Activated CD8-positive, alpha-beta T cell treated with anti-CD3 and anti-CD28 coated beads for 36 hours (primary cell): ENCODE measurements at regions of chr11 and their contacts with region 1.

Region 1: GRCh38 chr11:14907411-14908213 is 15.6 kb upstream of the CYP2R1 start:
- DNase-seq: peak; percentile 93
- ATAC-seq: peak; percentile 59
- H3K4me3 Mint-ChIP-seq: no peak overlapping the region
- H3K27ac Mint-ChIP-seq: no peak overlapping the region
- H3K4me1 Mint-ChIP-seq: peaks cover 48% of the 10 kb centered on the region
- H3K27me3 Mint-ChIP-seq: no peaks in the 10 kb centered on the region
- CTCF ChIP-seq: peak; percentile 90

Region 2: DNA sequence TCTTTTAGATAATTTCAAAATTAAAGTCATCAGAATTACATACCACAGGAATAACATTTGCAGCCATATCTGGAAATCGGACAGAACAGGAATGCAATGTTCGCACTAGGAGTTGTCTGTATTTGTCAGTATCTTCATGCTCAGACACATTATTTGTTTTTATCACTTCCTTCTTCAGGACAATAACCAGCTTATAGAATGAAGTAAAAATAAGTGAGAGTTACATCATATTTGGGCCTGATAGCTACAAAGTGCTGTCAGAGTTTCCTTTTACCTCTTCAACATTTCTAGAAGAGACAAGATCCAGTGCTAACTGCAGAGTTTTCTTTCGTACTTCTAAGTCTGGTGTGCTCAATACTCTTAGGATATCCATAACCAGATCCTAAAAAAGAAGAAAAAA is 426.9 kb before region 1 on chr11:
- CTCF ChIA-PET with region 1: interaction called, 15 read pairs
- POLR2A ChIA-PET with region 1: no interaction called
- intact Hi-C with region 1: no loop called
- DNase-seq: no peak
- ATAC-seq: no peak
- H3K4me3 Mint-ChIP-seq: peak overlapping the region; percentile 23
- H3K27ac Mint-ChIP-seq: peak overlapping the region; percentile 81
- H3K4me1 Mint-ChIP-seq: peaks cover 19% of the 10 kb centered on the region
- H3K27me3 Mint-ChIP-seq: no peaks in the 10 kb centered on the region
- CTCF ChIP-seq: no peak

Region 3: DNA sequence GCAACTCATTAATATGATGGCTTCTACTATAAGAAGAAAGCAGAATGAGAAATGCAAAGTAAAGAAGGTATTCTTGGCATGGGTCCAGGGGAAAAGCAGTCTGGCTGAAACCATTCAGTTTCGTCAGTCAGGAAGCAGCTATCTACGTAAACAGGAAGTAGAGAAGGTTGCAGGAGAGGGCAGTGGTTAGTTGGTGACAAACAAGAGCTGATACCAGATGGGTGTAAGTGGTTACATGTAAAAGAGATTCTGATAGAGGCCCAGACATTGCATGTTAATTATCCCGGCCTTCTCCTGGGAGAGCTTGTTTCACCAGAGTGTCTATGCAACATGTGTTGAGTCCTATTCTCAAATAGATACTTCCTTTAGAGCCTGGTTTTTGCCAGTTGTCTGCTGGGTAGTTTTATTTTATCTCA is 329.1 kb before region 1 on chr11:
- CTCF ChIA-PET with region 1: interaction called, 10 read pairs
- POLR2A ChIA-PET with region 1: no interaction called
- intact Hi-C with region 1: no loop called
- DNase-seq: peak; percentile 73
- ATAC-seq: peak; percentile 92
- H3K4me3 Mint-ChIP-seq: peak overlapping the region; percentile 14
- H3K27ac Mint-ChIP-seq: peak overlapping the region; percentile 77
- H3K4me1 Mint-ChIP-seq: peaks cover 59% of the 10 kb centered on the region
- H3K27me3 Mint-ChIP-seq: no peaks in the 10 kb centered on the region
- CTCF ChIP-seq: no peak

Region 4: DNA sequence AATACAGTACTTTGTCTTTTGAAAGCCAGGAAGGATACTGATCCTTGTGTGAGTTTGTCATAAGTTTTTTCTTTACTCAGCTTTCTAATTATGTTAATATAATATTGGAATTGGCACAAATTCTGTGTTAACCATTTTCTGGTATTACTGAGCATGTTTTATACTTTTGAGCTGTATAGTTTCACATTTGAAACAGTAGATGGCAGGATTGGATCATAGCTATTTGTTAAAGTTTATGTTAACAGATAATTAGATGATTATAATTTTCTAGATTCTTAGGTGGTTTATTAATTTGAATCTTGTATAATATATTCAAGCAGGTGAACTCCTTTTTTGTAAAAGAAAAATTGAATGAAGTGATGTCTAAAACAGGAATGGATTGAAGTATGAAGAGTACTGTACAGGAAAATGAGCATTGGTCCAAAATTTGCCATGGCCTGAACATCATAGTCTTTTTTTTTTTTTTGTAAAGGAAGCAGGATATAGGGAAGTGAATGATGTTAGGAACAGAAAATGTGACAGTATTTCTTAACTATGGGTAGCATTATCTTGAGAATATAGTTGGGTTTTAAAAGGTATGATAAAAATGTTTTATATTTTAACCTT is 117.6 kb before region 1 on chr11:
- CTCF ChIA-PET with region 1: interaction called, 214 read pairs
- POLR2A ChIA-PET with region 1: interaction called, 4 read pairs
- intact Hi-C with region 1: loop called (anchors 2 kb)
- DNase-seq: no peak
- ATAC-seq: peak; percentile 47
- H3K4me3 Mint-ChIP-seq: no peak overlapping the region
- H3K27ac Mint-ChIP-seq: no peak overlapping the region
- H3K4me1 Mint-ChIP-seq: peaks cover 37% of the 10 kb centered on the region
- H3K27me3 Mint-ChIP-seq: no peaks in the 10 kb centered on the region
- CTCF ChIP-seq: peak; percentile 66

Region 5: DNA sequence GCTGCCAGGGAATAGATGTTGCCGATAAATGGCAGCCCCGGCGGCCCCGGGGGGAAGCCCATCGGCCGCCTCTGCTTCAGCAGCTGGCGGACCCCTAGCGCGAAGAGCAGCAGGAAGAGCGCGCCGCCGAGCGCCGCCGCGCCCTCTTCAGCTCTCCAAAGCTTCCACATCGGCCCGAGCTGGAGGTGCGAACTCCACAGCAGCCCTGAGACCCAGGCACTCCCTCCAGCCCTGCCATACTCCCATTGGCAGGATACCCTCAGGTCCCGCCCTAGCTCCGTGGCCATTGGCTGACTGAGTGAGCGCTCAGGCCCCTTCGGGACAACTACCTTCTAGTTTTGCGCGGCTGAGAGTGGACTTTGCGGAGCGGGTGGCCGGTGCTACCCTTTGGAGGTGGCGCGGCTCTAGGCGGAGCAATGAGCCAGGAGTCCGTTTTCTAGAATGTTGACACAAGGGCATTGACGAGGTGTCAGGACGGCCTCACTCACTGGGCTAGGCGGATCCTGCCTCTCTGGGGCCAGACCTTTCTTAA is 15.5 kb before region 1 on chr11 and contains the start of gene CYP2R1:
- CTCF ChIA-PET with region 1: interaction called, 91 read pairs
- POLR2A ChIA-PET with region 1: interaction called, 4 read pairs
- intact Hi-C with region 1: no loop called
- DNase-seq: peak; percentile 94
- ATAC-seq: peak; percentile 84
- H3K4me3 Mint-ChIP-seq: peak within 1 kb of the TSS; percentile 91
- H3K27ac Mint-ChIP-seq: peak within 1 kb of the TSS; percentile 100
- H3K4me1 Mint-ChIP-seq: peaks cover 54% of the 10 kb centered on the region
- H3K27me3 Mint-ChIP-seq: no peaks in the 10 kb centered on the region
- CTCF ChIP-seq: no peak
- total RNA-seq, gene CYP2R1: 12.9 to 13.9 TPM

Region 6: DNA sequence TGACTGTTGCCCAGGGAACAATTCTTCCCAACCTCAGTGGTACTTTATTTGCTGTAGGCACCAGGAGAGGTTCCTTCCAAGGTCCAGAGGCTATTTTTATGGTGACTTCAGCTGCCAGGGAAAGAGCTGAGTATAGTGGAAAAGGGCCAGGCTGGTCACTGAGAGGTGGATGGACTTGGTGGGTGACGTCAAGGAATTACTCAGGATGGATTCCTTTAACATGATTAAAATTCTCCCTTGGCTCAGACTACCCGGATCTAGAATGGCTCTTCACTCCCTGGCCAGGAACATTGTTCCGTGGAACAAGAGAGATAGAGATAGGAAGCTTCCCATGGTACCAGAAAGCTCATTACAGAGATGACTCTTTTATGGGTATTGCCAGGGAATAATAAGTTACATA is 73.2 kb after region 1 on chr11:
- CTCF ChIA-PET with region 1: interaction called, 85 read pairs
- POLR2A ChIA-PET with region 1: no interaction called
- intact Hi-C with region 1: no loop called
- DNase-seq: no peak
- ATAC-seq: no peak
- H3K4me3 Mint-ChIP-seq: no peak overlapping the region
- H3K27ac Mint-ChIP-seq: no peak overlapping the region
- H3K4me1 Mint-ChIP-seq: peaks cover 2% of the 10 kb centered on the region
- H3K27me3 Mint-ChIP-seq: peaks cover 17% of the 10 kb centered on the region
- CTCF ChIP-seq: no peak

Region 7: DNA sequence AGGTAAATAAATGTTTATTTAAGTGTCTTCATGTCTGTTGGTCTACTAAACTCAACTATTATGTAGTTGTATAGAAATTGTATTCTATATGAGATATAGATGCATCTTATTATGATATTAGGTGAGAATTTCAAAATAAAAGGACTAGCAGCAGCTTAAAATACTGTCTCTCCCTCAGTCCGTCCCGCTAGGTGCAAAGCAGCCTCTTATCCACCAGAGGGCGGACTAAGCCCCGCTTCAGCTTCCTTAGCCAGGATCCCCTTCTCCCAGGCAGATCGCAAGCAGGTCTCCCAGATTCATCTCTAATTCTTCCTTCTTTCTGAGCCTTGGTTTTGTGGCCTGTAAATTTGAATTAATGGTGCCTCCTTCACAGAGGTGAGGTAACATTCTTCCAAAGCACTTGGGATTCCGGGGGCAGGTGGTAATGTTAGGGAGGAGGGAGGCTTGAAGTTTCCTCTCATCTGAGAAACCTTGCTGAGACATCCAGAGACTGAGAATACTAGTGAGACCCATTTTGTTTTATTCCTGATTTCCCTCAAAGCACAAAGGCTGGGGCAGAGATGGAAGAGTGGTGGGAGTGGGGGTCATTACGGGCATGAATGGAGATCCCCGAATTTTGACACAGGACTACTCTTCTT is 193.6 kb after region 1 on chr11:
- CTCF ChIA-PET with region 1: interaction called, 26 read pairs
- POLR2A ChIA-PET with region 1: no interaction called
- intact Hi-C with region 1: no loop called
- DNase-seq: peak; percentile 73
- ATAC-seq: peak; percentile 82
- H3K4me3 Mint-ChIP-seq: no peak overlapping the region
- H3K27ac Mint-ChIP-seq: no peak overlapping the region
- H3K4me1 Mint-ChIP-seq: no peaks in the 10 kb centered on the region
- H3K27me3 Mint-ChIP-seq: peaks cover 9% of the 10 kb centered on the region
- CTCF ChIP-seq: peak; percentile 94